Activated CD8-positive, alpha-beta T cell treated with anti-CD3 and anti-CD28 coated beads, Interleukin-2, amount 10 ng/mL, durations not matched to agents 7 days and 5 days (primary cell): ENCODE measurements at regions of chr17 and their contacts with region 1.

Region 1: GRCh38 chr17:28763804-28764266 is 20.0 kb downstream of the TRAF4 start:
- DNase-seq: peak; percentile 87
- ATAC-seq: peak; percentile 78
- H3K4me3 Mint-ChIP-seq: no peak overlapping the region
- H3K27ac Mint-ChIP-seq: no peak overlapping the region
- H3K4me1 Mint-ChIP-seq: peaks cover 16% of the 10 kb centered on the region
- H3K27me3 Mint-ChIP-seq: no peaks in the 10 kb centered on the region

Region 2: GRCh38 chr17:28720247-28720996 is 43.4 kb before region 1 on chr17:
- CTCF ChIA-PET with region 1: interaction called, 11 read pairs
- POLR2A ChIA-PET with region 1: no interaction called
- DNase-seq: peak; percentile 61
- ATAC-seq: peak; percentile 3
- H3K4me3 Mint-ChIP-seq: peak overlapping the region; percentile 97
- H3K27ac Mint-ChIP-seq: peak overlapping the region; percentile 97
- H3K4me1 Mint-ChIP-seq: peaks cover 61% of the 10 kb centered on the region
- H3K27me3 Mint-ChIP-seq: peaks cover 15% of the 10 kb centered on the region

Region 3: GRCh38 chr17:28788100-28788499 is 24.3 kb after region 1 on chr17:
- CTCF ChIA-PET with region 1: interaction called, 34 read pairs
- POLR2A ChIA-PET with region 1: no interaction called
- DNase-seq: no peak
- ATAC-seq: no peak
- H3K4me3 Mint-ChIP-seq: no peak overlapping the region
- H3K27ac Mint-ChIP-seq: no peak overlapping the region
- H3K4me1 Mint-ChIP-seq: no peaks in the 10 kb centered on the region
- H3K27me3 Mint-ChIP-seq: no peaks in the 10 kb centered on the region

Region 4: DNA sequence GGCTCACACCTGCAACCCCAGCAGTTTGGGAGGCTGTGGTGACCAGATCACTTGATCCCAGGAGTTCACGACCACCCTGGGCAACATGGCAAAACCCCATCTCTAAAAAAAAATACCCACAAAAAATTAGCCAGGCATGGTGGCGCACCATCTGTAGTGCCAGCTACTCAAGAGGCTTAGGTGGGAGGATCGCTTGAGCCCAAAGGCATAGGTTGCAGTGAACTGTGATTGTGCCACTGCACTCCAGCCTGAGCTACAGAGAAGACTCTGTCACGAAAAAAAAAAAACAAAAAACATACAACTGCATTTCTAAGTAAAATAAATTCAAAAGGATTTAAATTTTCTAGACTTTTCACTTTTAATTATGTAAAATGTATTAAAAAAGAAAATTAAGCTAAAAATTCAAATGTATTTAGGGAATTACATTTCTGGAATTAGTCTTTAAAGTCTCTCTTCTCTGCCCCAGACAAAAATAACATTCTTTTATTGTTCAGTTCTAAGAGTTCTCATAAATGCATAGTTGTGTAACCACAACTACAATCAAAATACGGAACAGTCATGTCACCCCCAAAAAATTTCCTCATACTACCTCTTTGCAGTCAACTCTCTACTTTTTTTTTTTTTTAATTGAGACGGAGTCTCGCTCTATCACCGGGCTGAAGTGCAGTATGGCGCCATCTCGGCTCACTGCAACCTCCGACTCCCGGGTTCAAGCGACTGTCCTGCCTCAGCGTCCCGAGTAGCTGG is 64.6 kb after region 1 on chr17:
- CTCF ChIA-PET with region 1: interaction called, 21 read pairs
- POLR2A ChIA-PET with region 1: no interaction called
- DNase-seq: no peak
- ATAC-seq: no peak
- H3K4me3 Mint-ChIP-seq: no peak overlapping the region
- H3K27ac Mint-ChIP-seq: no peak overlapping the region
- H3K4me1 Mint-ChIP-seq: peaks cover 4% of the 10 kb centered on the region
- H3K27me3 Mint-ChIP-seq: no peaks in the 10 kb centered on the region

Region 5: GRCh38 chr17:28896884-28897768 is 133.3 kb after region 1 on chr17 and contains the start of gene FLOT2:
- CTCF ChIA-PET with region 1: interaction called, 64 read pairs
- POLR2A ChIA-PET with region 1: interaction called, 4 read pairs
- DNase-seq: peak; percentile 73
- ATAC-seq: peak; percentile 74
- H3K4me3 Mint-ChIP-seq: peak within 1 kb of the TSS; percentile 98
- H3K27ac Mint-ChIP-seq: peak within 1 kb of the TSS; percentile 95
- H3K4me1 Mint-ChIP-seq: peaks cover 66% of the 10 kb centered on the region
- H3K27me3 Mint-ChIP-seq: no peaks in the 10 kb centered on the region
- total RNA-seq, gene FLOT2: 197 to 198 TPM

Region 6: DNA sequence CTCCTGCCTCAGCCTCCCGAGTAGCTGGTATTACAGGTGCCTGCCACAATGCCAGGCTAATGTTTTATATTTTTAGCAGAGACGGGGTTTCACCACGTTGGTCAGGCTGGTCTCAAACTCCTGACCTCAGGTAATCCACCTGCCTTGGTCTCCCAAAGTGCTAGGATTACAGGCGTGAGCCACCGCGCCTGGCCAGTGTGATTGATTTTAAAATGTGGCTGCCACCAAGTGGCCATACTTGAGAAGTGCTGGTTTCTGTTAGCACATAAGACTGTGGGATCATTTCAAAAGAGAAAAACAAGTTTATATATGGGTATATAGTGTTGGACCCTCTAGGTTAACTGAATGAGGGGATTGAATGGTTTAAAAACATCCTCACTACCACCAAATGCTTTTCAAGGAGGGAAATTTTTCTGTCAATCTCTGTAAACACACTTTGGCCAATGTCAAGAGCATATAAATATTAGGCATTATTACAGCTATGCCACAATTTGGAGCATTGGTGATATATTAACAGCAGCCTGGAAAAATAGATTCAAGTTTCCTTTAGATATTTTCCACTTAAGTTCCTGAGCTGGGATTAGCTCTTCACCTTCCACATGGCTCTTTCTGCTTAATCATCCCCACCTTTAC is 152.6 kb after region 1 on chr17:
- CTCF ChIA-PET with region 1: interaction called, 44 read pairs
- POLR2A ChIA-PET with region 1: no interaction called
- DNase-seq: peak; percentile 54
- ATAC-seq: peak; percentile 74
- H3K4me3 Mint-ChIP-seq: no peak overlapping the region
- H3K27ac Mint-ChIP-seq: no peak overlapping the region
- H3K4me1 Mint-ChIP-seq: no peaks in the 10 kb centered on the region
- H3K27me3 Mint-ChIP-seq: no peaks in the 10 kb centered on the region